IMR-90 (cell line): ENCODE measurements at regions of chr22 and their contacts with region 1.

Region 1: GRCh38 chr22:17830043-17830961 is 56.0 kb upstream of the BID start:
- DNase-seq: peak; percentile 75
- ATAC-seq: peak; percentile 100
- H3K4me3 ChIP-seq: no peak overlapping the region
- H3K27ac ChIP-seq: no peak overlapping the region
- H3K4me1 ChIP-seq: no peaks in the 10 kb centered on the region
- H3K27me3 ChIP-seq: no peaks in the 10 kb centered on the region
- CTCF ChIP-seq: peak; percentile 98
- POLR2A ChIP-seq: no peak; the same call in 1 of the 2 replicates
- RAD21 ChIP-seq: peak; percentile 98

Region 2: DNA sequence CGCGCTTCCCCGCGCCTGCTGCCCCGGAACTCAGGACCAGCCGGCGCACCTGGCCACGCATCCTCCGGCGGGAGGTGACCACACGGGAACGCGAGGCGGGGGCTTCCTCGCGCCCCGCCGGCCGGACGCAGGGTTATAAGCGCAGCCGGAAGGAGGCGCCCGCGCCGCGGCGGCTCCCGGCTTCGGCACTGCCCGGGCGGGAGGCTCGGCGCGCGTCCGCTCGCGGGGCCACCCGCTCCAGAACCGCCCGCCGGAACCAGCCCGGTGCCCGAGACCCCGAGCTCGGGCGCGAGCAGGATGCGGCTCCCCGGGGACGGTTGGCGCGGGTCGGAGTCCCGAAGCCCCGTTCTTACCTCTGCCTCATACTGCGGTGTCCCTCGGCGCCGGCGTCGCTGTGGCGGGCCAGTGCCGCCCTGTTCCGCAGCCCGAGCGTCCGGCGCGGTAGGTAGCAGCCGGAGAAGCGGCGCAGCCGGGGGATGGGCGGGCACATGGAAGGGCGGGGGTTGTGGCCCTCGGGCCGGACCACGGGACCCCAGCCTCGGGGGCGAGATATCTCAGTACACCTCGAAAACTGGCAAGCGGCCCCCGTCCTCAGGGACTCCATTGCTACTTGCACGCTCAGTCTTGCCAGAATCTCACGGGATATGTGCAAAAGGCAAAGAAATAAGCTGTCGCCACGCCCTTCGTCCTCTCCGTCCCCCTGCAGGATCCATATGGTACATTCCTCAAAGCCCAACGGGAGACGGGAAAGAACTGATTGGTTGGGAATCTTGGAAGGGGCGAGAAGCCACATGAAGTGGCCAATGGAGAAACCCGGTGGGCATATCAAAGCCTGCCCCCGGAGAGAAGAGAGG is 171.0 kb after region 1 on chr22:
- CTCF ChIA-PET with region 1: no interaction called
- POLR2A ChIA-PET with region 1: no interaction called
- dilution Hi-C with region 1: no loop called
- in situ Hi-C with region 1: no loop called
- intact Hi-C with region 1: no loop called
- DNase-seq: peak; percentile 99
- ATAC-seq: peak; percentile 96
- H3K4me3 ChIP-seq: peak overlapping the region; percentile 86
- H3K27ac ChIP-seq: peak overlapping the region; percentile 97
- H3K4me1 ChIP-seq: peaks cover 9% of the 10 kb centered on the region
- H3K27me3 ChIP-seq: no peaks in the 10 kb centered on the region
- CTCF ChIP-seq: peak; percentile 73
- POLR2A ChIP-seq: peak; percentile 81
- RAD21 ChIP-seq: peak; percentile 72

Region 3: DNA sequence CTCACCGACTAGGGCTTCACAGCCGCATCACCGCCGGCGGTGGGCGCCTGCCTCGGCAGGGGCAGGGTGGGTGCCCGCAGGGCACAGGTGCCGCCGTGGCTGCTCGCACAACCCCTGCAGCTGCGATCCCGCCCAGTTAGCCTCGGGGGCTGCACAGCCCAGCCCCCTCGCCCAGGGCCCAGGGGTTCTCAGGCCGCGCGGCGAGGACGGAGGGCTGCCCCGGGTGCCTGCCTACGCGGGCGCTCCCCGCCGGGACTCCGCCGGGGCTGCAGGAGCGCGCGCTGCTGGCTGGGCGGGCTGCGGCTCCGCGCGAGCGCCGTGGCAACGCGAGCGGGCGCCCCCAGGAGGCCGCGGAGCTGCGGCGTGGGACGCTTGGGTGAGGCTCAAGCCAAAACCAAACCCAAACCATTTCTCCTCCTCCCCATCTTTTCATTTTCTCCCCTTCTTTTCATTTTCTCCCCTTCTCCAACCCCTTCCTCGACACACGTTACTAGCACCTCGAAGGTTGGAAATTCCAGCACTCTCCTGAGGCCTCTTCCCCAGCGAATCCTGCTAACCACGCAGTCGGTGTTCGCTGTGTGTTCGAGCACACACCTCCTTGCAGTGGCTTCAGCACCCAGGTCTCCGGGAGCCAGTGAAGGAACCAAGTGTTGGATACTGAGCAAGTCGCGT is 194.1 kb after region 1 on chr22 and contains the start of gene MICAL3:
- CTCF ChIA-PET with region 1: no interaction called
- POLR2A ChIA-PET with region 1: no interaction called
- dilution Hi-C with region 1: no loop called
- in situ Hi-C with region 1: no loop called
- intact Hi-C with region 1: loop called (anchors 1 kb)
- DNase-seq: peak; percentile 64
- ATAC-seq: peak; percentile 91
- H3K4me3 ChIP-seq: peak within 1 kb of the TSS; percentile 52
- H3K27ac ChIP-seq: peak within 1 kb of the TSS; percentile 21; the same call in 1 of the 2 replicates
- H3K4me1 ChIP-seq: peaks cover 2% of the 10 kb centered on the region; the same call in 1 of the 2 replicates
- H3K27me3 ChIP-seq: no peaks in the 10 kb centered on the region
- CTCF ChIP-seq: peak; percentile 78
- POLR2A ChIP-seq: no peak
- RAD21 ChIP-seq: peak; percentile 63
- total RNA-seq, gene MICAL3: 16.1 and 17.6 TPM in 2 replicates